ENCODE measurements at regions of chr9 and their contacts with region 1.

Region 1: DNA sequence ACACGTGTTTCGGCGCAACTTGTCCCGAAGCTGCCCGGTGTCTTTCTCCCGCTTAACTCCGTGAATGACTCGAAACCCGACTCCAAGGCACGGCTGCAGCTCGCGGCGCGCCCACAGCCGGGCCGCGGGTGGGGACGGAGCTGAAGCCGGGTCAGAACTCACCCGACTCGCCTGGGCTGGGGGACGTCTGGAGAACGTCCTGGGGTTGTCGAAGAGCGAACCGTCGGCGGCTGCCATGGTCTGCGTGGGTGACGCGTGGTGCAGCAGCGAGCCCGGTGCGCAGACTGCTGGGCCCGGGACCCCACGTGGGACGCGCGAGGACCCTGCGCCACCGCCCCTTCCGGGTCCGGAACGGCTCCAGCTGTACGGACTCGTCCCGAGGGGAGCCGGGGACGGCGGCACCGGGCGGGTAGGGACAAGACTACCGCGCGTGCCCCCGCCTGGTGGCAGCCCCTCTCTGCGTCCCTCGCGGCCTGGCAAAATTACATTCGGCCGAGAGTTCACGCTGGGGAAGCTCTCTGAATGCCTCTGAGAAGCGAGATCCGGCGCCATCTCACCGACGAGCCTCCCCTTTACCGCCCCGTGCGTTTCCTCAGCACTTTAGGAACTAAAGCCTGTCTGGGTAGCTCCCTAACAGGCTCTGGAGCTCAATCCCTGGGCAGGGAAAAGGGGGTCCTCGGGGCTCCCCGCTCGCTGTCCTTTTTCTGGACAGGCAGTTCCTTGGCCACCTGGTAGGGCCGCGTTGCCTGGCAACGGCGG is at the start of gene DDX31:
- DNase-seq: peak; percentile 42
- H3K4me3 ChIP-seq: peak within 1 kb of the TSS; percentile 96
- H3K27ac ChIP-seq: peak within 1 kb of the TSS; percentile 99
- H3K27me3 ChIP-seq: no peaks in the 10 kb centered on the region
- CTCF ChIP-seq: no peak
- polyA plus RNA-seq, gene DDX31: 11.8 and 12.2 TPM in 2 replicates

Region 2: GRCh38 chr9:132531187-132531586 is 138.7 kb before region 1 on chr9:
- CTCF ChIA-PET with region 1: no interaction called
- POLR2A ChIA-PET with region 1: no interaction called
- DNase-seq: no peak
- H3K4me3 ChIP-seq: no peak overlapping the region
- H3K27ac ChIP-seq: no peak overlapping the region
- H3K27me3 ChIP-seq: peaks cover 12% of the 10 kb centered on the region
- CTCF ChIP-seq: no peak

Region 3: DNA sequence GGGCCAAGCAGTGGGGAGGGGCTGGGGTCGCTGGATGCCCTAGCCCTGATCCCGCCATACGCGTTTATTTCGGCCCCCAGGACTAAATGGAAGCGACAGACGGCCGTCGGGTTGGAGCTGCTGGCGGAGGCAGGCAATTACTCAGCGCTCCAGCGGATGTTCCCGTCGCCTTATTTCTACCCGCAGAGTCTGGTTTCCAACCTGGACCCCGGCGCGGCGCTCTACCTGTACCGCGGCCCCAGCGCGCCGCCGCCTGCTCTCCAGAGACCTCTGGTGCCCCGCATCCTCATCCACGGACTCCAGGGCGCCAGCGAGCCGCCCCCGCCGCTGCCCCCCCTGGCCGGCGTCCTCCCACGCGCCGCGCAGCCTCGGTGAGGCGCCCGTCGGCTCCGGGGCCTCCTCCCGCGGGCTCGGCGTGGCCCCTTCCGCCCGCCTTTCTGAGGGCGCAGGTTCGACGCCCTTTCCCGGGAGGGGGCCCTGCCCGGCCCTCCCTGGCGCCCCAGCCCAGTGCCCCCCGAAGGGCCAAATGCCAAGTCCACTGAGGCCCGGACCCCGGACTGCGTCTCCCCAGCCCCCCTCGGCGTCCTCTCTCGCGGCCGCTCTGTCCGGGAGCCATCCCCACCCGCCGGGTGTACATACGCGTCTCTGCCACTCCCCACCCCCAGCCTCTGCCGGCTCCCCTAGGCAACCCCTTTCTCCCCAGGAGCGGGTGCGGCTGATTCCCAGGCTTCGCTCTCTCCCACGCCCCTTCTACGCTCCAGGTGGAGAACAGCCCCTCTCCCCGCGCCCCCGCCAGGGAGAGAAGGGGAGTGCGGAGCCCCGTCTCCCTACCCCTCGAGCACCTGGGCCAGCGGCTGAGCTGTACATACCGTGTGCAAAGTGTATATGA is 80.5 kb before region 1 on chr9:
- CTCF ChIA-PET with region 1: no interaction called
- POLR2A ChIA-PET with region 1: no interaction called
- DNase-seq: no peak
- H3K4me3 ChIP-seq: no peak overlapping the region
- H3K27ac ChIP-seq: no peak overlapping the region
- H3K27me3 ChIP-seq: peaks cover 76% of the 10 kb centered on the region
- CTCF ChIP-seq: no peak

Region 4: DNA sequence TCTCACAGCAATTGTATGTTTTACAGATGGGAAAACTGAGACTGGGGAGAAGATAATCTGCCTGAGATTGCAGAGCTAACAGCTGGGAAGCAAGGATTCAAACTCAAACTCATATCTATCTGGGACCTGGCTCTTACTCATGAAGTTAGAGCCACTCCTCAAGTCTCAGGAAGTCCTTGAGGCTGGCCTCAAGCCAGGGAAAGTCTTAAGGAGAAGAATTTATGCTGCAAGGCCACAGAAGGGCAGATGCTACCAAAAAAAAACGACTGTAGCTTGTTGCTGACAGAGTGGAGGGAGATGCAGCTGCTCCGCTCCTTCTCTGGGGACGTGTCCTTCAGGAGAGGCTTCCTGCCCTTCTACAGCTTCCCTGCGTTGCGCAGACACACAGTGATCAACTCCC is 47.7 kb before region 1 on chr9:
- CTCF ChIA-PET with region 1: no interaction called
- POLR2A ChIA-PET with region 1: no interaction called
- DNase-seq: no peak
- H3K4me3 ChIP-seq: no peak overlapping the region
- H3K27ac ChIP-seq: peak overlapping the region; percentile 11
- H3K27me3 ChIP-seq: no peaks in the 10 kb centered on the region
- CTCF ChIP-seq: no peak

Region 5: DNA sequence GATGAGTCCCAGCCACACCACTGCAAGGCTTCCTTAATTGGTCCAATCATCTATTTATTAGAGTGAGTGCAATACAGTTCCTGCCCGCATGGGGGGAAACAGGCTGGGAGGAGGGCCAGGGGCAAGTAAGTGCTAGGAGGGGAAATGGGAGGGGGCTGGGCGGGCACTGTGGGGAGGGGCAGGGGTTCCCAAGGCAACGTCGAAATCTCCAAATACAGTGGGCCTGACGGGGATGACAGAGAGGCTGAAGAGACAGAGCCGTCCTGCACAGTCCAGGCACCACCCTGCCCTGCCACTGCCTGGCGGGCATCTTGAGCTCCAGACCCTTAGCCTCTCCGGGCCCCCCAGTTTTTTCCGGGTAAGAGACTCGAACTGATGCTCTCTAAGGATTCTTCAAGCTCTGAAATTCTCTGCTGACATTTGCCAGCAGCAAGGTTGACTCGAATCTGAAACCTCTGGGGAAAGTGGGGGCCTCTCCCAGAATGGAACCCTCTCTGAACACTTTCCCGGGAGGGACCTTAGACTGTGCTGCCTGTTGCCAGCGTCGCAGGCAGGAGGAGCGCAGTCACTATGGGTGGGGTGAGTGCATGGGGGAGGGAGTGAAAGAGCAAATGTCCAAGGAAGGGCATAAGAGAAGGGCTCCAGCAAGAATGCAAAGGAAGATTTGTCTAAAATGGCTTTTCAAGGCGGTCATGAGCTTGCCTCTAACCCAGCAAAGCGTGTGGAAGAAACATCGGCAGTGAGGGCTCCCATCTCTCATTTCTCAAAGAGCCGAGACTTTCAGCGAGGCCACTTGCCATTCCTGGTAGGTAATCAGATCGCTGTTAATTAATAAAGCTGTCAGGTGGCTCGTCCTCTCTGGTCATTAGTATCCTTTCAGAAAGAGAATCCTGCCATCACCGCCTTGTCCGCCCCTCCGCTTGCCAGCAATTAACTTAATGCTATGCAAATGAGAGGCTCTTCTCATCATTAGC is 99.3 kb after region 1 on chr9:
- CTCF ChIA-PET with region 1: no interaction called
- POLR2A ChIA-PET with region 1: interaction called, 11 read pairs
- DNase-seq: no peak
- H3K4me3 ChIP-seq: peak overlapping the region; percentile 75
- H3K27ac ChIP-seq: peak overlapping the region; percentile 61
- H3K27me3 ChIP-seq: peaks cover 2% of the 10 kb centered on the region
- CTCF ChIP-seq: peak; percentile 53